OCI-LY7 (cell line): ENCODE measurements at regions of chr14 and their contacts with region 1.

Region 1: GRCh38 chr14:37253905-37254304 is 56.2 kb downstream of the MIPOL1 start:
- DNase-seq: no peak
- H3K4me3 ChIP-seq: no peak overlapping the region
- H3K27ac ChIP-seq: no peak overlapping the region
- H3K4me1 ChIP-seq: no peaks in the 10 kb centered on the region
- CTCF ChIP-seq: no peak

Region 2: GRCh38 chr14:37826869-37827268 is 573.0 kb after region 1 on chr14:
- CTCF ChIA-PET with region 1: no interaction called
- POLR2A ChIA-PET with region 1: interaction called, 11 read pairs
- intact Hi-C with region 1: no loop called
- DNase-seq: no peak
- H3K4me3 ChIP-seq: no peak overlapping the region
- H3K27ac ChIP-seq: no peak overlapping the region
- H3K4me1 ChIP-seq: no peaks in the 10 kb centered on the region
- CTCF ChIP-seq: no peak